BJ (cell line): ENCODE measurements at regions of chr2 and their contacts with region 1.

Region 1: GRCh38 chr2:233482616-233483015 is 84.0 kb downstream of the USP40 start:
- DNase-seq: no peak
- H3K4me3 ChIP-seq: no peak overlapping the region
- H3K27me3 ChIP-seq: no peaks in the 10 kb centered on the region
- CTCF ChIP-seq: no peak

Region 2: DNA sequence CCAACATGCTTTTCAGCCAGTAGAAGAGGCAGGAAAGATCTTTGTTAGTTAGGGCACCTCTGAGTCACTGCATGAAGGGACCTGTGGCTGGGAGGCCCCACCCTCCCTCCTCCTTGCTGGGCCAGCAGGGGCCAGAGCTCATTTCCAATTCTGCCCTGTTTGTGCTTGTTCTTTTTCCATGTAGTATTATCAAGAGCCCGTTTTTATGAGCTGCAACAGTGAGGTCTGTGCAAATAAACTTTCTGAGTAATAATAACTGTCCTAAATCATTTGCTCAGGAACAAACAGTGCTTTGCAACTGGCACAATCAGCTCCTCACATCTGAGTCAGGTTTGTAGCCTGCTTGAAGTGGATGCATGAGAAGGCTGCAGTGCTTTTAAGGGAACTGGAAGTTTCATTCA is 886.2 kb after region 1 on chr2:
- CTCF ChIA-PET with region 1: no interaction called
- POLR2A ChIA-PET with region 1: interaction called, 23 read pairs
- DNase-seq: peak; percentile 32
- H3K4me3 ChIP-seq: no peak overlapping the region
- H3K27me3 ChIP-seq: peaks cover 3% of the 10 kb centered on the region; the same call in 1 of the 2 replicates
- CTCF ChIP-seq: 0 out of 2 replicates have a peak, but pooled peaks have one; percentile 6